HepG2 (cell line): ENCODE measurements at regions of chr7 and their contacts with region 1.

Region 1: DNA sequence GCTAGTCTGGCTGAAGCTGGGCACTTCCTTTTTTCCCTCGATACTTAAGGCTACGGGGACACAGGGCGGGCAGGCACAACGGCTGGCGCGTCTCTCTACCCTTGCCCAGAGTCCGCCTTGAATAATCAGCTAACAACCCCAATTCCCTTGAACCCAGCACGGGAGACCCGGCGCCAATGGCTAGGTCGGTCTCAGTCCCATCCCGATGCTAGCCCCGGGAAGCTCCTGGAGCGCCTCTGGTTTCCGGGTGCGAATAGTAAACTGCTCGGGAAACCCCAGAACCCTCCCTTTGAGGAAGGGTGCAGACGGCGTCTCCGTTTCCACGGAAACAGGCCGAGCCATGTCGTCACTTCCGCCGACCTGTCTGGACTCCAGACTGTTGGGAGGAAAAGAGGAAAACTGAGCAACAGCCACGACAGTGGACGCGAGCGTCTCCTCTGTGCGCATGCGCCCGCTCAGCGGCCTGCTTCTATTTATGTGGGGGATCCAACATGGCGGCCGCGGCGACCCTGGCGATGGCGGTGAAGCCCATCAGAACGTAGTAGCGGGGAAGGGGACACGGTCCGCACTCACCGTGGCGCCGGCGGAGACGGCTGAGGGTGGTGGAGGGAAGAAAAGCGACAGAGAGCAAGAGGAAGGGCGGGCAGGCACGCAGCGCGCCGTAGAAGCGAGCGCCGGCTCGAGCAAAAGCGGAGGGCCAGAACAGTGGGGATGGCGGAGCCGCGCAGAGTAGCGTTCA is at the start of gene UBN2:
- DNase-seq: peak; percentile 94
- ATAC-seq: peak; percentile 94
- H3K4me3 ChIP-seq: peak within 1 kb of the TSS; percentile 79 to 98 (median 95)
- H3K27ac ChIP-seq: peak within 1 kb of the TSS; percentile 82
- H3K4me1 ChIP-seq: peaks cover 25% of the 10 kb centered on the region
- H3K27me3 ChIP-seq: no peaks in the 10 kb centered on the region
- CTCF ChIP-seq: no peak
- EP300 ChIP-seq: no peak
- POLR2A ChIP-seq: peak; percentile 76 to 86
- RAD21 ChIP-seq: no peak
- total RNA-seq, gene UBN2: 5.6 and 8.0 TPM in 2 replicates

Region 2: DNA sequence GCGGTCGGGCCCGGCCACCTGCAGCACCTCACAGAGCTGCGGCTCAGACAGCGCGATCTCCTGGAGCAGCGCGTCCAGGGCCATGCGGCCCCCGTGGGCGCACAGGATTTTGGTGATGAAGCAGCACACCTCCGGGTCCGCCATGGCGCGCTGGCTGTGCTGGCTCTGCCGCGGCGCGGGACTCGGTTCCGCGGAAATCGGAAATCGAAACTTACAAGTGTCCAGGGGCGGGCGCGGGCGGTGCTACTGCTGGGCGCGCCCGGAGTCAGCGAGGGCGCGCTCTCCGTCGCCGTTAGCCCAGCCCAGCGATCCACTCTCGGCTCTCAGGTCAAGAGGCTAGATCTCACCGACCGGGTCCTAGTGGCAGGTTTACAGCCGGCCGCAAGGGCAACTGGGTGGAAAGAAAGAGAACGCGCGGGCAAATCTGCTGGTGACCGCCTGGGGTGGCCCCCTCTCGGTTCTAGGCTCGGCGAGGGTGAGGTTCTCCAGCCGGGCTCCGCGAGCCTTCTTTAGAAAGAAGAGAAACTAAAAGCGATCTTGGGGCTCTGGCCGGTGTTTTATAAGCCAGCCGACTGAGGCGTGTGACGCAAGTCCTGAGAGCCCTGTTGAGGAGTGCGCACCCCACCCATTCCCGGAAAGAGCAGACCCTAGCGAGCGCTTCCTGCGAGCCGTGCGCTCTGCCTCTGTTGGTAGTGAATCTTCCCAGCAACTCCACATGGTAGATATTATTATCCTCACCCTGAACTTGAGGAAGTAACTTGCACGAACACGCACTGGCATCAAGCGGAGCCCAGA is 121.6 kb before region 1 on chr7 and contains the start of gene ZC3HAV1:
- CTCF ChIA-PET with region 1: no interaction called
- POLR2A ChIA-PET with region 1: interaction called, 3 read pairs
- in situ Hi-C with region 1: no loop called
- intact Hi-C with region 1: loop called (anchors 1 kb)
- DNase-seq: peak; percentile 76
- ATAC-seq: peak; percentile 93
- H3K4me3 ChIP-seq: peak within 1 kb of the TSS; percentile 72 to 91 (median 80)
- H3K27ac ChIP-seq: peak within 1 kb of the TSS; percentile 91
- H3K4me1 ChIP-seq: peaks cover 70% of the 10 kb centered on the region
- H3K27me3 ChIP-seq: no peaks in the 10 kb centered on the region; a peak in 1 of 5 replicates
- CTCF ChIP-seq: no peak
- EP300 ChIP-seq: no peak
- POLR2A ChIP-seq: peak; percentile 59 to 62
- RAD21 ChIP-seq: no peak; the same call in none of the 2 replicates
- total RNA-seq, gene ZC3HAV1: 23.7 and 33.5 TPM in 2 replicates

Region 3: DNA sequence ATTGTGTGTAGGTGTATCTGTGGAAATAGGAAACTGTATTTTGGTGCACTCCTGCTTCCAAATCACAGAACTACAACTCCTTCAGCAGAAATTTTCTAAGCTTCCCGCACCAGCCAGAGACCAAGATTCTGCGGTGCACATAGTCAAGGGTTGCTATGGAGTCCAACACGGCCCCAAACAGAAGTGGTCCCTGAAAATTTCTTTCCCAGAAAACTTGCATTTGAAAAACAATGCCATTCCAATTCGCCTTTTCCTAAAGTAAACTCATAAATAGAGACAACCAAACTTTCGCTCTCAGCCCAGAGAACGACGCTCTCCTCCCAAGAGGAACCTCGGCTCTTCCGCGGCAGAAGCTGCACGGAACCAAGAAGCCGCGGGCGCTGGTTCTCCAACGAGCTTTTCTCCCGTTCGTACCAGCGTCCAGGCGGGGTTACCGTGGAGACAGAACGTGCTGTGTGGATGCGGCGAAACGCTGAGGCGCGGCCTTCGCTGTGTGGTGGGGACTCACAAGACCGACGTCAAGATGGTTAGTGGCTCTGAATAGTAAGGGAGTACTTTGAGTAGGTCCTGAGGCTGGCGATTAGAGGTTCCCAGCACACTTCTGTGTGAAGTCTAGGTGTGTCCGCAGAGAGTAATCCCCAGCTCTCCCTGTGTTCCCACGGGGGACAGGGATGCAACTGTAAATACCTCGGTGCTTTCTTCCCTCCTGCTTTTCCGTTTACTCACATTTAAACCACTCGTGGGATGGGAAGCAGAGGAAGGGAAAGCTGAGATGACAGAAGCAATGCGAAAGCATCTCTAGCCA is 97.4 kb before region 1 on chr7:
- CTCF ChIA-PET with region 1: no interaction called
- POLR2A ChIA-PET with region 1: interaction called, 6 read pairs
- in situ Hi-C with region 1: no loop called
- intact Hi-C with region 1: loop called (anchors 2 kb)
- DNase-seq: peak; percentile 70
- ATAC-seq: peak; percentile 98
- H3K4me3 ChIP-seq: peak overlapping the region; percentile 61 to 80 (median 66)
- H3K27ac ChIP-seq: peak overlapping the region; percentile 1
- H3K4me1 ChIP-seq: peaks cover 29% of the 10 kb centered on the region
- H3K27me3 ChIP-seq: no peaks in the 10 kb centered on the region; a peak in 1 of 5 replicates
- CTCF ChIP-seq: no peak; the same call in 1 of the 2 replicates
- EP300 ChIP-seq: peak in 1 of 2 experiments; percentile 37; a peak in 1 of 4 replicates
- POLR2A ChIP-seq: peak in 1 of 2 experiments; percentile 70; a peak in 3 of 4 replicates
- RAD21 ChIP-seq: peak; percentile 52; the same call in 1 of the 2 replicates

Region 4: GRCh38 chr7:139259142-139259541 is 28.2 kb after region 1 on chr7:
- CTCF ChIA-PET with region 1: no interaction called
- POLR2A ChIA-PET with region 1: no interaction called
- in situ Hi-C with region 1: no loop called
- intact Hi-C with region 1: no loop called
- DNase-seq: no peak
- ATAC-seq: no peak
- H3K4me3 ChIP-seq: no peak overlapping the region
- H3K27ac ChIP-seq: no peak overlapping the region
- H3K4me1 ChIP-seq: peaks cover 8% of the 10 kb centered on the region; the same call in 1 of the 2 replicates
- H3K27me3 ChIP-seq: no peaks in the 10 kb centered on the region
- CTCF ChIP-seq: no peak
- EP300 ChIP-seq: no peak
- POLR2A ChIP-seq: no peak
- RAD21 ChIP-seq: no peak

Region 5: GRCh38 chr7:139304517-139304916 is 73.6 kb after region 1 on chr7:
- CTCF ChIA-PET with region 1: no interaction called
- POLR2A ChIA-PET with region 1: no interaction called
- in situ Hi-C with region 1: no loop called
- intact Hi-C with region 1: no loop called
- DNase-seq: no peak
- ATAC-seq: no peak
- H3K4me3 ChIP-seq: no peak overlapping the region
- H3K27ac ChIP-seq: no peak overlapping the region
- H3K4me1 ChIP-seq: peaks cover 20% of the 10 kb centered on the region
- H3K27me3 ChIP-seq: no peaks in the 10 kb centered on the region
- CTCF ChIP-seq: no peak
- EP300 ChIP-seq: no peak
- POLR2A ChIP-seq: no peak
- RAD21 ChIP-seq: no peak

Region 6: DNA sequence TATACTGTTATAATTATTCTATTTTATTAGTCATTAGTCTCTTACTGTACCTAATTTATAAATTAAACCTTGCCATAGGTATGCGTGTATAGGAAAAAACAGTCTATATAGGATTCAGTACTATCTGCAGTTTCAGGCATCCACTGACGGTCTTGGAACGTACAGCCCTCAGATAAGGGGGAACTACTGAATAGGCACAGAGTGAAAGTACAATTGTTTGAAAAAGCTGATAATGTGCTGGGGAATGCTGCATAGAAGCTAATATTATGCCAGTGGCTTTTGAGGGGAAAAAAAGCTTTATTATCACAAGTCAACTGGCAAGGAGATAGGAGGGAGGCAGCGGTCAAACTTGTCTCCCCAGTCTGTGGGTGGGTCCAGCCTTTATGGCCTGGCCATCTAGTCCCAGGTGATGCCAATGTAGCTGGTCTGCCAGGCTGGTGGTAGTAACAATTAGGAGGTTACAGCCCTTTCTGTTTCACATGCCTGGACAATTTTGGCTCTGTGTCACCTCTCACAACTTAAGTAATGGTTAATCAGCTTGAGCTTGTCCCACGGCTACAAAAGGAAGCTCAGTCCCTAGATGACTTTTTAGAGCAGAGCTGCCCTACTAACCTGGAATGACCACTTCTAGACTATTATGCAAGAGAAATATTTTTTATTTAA is 101.9 kb after region 1 on chr7:
- CTCF ChIA-PET with region 1: no interaction called
- POLR2A ChIA-PET with region 1: no interaction called
- in situ Hi-C with region 1: no loop called
- intact Hi-C with region 1: loop called (anchors 10 kb)
- DNase-seq: no peak
- ATAC-seq: peak; percentile 64
- H3K4me3 ChIP-seq: peak overlapping the region in 1 of 3 experiments; percentile 40; a peak in 2 of 6 replicates
- H3K27ac ChIP-seq: no peak overlapping the region
- H3K4me1 ChIP-seq: peaks cover 10% of the 10 kb centered on the region; the same call in 1 of the 2 replicates
- H3K27me3 ChIP-seq: no peaks in the 10 kb centered on the region
- CTCF ChIP-seq: no peak
- EP300 ChIP-seq: no peak
- POLR2A ChIP-seq: no peak
- RAD21 ChIP-seq: no peak

Region 7: DNA sequence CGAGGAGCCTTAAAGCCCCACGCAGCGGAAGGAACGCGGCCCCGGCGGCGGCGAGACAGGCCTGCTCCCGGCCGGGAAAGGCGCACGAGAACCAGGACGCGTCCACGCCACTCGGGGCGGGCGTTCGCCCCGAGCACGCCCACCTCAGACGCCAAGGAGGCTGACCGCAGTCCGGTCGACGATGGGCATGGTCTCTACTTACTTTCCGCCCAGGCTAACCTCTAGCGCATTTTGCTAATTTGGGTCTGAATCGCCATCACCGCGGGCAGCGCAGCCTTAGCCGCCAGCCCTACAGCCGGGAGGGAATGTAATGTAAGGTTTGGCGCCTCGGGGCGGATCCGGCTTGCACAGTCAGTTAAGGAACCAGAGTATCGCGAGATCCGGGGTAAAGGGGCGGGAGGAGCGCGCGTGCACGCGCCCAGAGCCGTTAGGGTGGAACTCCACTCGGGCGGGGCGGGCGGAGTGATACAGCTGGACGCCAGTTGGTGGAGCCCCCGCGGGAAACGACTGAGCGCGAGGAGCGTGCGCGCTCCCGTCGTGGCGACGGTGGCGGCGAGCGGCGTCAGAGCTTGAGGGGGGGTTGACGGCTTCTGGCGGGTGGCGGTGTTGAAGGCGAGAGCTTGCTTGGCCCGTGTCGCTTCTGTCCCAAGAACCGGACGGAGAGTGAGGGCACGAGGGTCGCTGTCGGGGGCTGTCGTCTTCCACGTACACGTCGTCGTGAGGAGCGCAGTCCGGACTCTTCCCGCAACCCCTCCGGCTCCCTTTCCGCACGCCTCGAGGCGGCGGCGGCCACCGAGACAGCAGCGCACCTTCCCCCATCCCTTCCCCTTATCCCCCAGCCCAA is 128.6 kb after region 1 on chr7 and contains the start of gene LUC7L2:
- CTCF ChIA-PET with region 1: no interaction called
- POLR2A ChIA-PET with region 1: interaction called, 10 read pairs
- in situ Hi-C with region 1: no loop called
- intact Hi-C with region 1: no loop called
- DNase-seq: peak; percentile 95
- ATAC-seq: peak; percentile 84
- H3K4me3 ChIP-seq: peak within 1 kb of the TSS; percentile 70 to 97 (median 89)
- H3K27ac ChIP-seq: peak within 1 kb of the TSS; percentile 99
- H3K4me1 ChIP-seq: peaks cover 30% of the 10 kb centered on the region
- H3K27me3 ChIP-seq: no peaks in the 10 kb centered on the region
- CTCF ChIP-seq: peak; percentile 48
- EP300 ChIP-seq: peak in 1 of 2 experiments; percentile 42; a peak in 1 of 4 replicates
- POLR2A ChIP-seq: peak; percentile 93 to 98
- RAD21 ChIP-seq: peak; percentile 6; the same call in 1 of the 2 replicates
- total RNA-seq, gene LUC7L2: 50.7 and 59.5 TPM in 2 replicates